ENCODE measurements at regions of chr11 and their contacts with region 1.

Region 1: GRCh38 chr11:11028017-11028692 is 170.3 kb upstream of the ZBED5 start:
- DNase-seq: no peak
- ATAC-seq: peak; percentile 97
- H3K4me3 ChIP-seq: no peak overlapping the region
- H3K27ac ChIP-seq: no peak overlapping the region
- H3K4me1 ChIP-seq: no peaks in the 10 kb centered on the region
- H3K27me3 ChIP-seq: peaks cover 0 to 2% of the 10 kb centered on the region in 2 experiments; a peak in 2 of 4 replicates
- CTCF ChIP-seq: peak; percentile 81 to 88 (median 83)
- EP300 ChIP-seq: no peak
- POLR2A ChIP-seq: no peak
- RAD21 ChIP-seq: peak; percentile 74

Region 2: DNA sequence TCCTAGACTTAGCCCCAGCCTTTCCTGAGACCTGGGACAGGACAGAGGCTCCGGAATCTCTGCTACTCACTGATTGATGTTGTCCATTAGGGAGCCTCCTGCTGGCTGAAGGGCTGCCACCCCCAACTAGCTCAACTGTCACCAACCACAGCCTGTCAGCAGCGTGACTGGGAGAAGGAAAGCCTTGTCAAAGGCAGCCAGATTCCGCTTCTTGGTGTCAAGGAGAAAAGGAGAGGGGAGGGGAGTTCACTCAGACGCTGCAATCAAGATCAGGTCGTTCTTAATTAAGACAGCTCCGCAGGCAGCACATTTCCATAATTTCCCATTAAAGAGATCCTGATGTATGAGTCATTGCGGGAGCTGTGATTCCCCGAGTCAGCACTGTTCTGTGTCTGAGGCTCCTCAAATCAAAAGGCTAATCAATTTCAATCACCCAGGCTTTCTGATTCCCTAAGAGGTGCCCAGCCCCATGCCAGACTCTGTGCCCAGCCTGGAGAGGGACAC is 17.5 kb before region 1 on chr11:
- CTCF ChIA-PET with region 1: interaction called, 21 read pairs
- POLR2A ChIA-PET with region 1: no interaction called
- RAD21 ChIA-PET with region 1: no interaction called
- SMC1A ChIA-PET with region 1: interaction called, 15 read pairs
- in situ Hi-C with region 1: no loop called
- intact Hi-C with region 1: no loop called
- DNase-seq: no peak
- ATAC-seq: no peak
- H3K4me3 ChIP-seq: no peak overlapping the region
- H3K27ac ChIP-seq: no peak overlapping the region
- H3K4me1 ChIP-seq: no peaks in the 10 kb centered on the region
- H3K27me3 ChIP-seq: peaks cover 0 to 5% of the 10 kb centered on the region in 2 experiments; a peak in 2 of 4 replicates
- CTCF ChIP-seq: 0 out of 6 replicates have a peak, but pooled peaks of 1 of the 3 experiments have one; percentile 7
- EP300 ChIP-seq: no peak
- POLR2A ChIP-seq: no peak
- RAD21 ChIP-seq: no peak

Region 3: DNA sequence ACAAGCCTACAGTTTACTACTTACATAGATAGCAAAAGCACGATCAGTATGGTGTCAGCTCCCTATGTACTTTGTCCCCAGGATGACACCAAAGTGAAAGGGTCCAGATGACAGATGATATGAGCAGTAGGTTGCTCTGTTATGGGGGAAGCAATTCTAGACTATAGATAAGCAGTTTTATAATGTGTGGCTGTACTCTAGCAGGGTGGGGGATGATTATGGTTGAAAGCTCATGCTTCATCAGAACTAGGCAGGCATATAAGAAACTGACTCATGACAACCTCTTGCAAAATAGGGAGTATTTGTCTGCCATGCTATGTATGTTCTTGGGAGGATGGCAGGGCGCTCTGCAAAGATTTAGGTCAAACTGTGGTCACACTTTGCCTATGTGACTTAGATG is 12.1 kb before region 1 on chr11:
- CTCF ChIA-PET with region 1: interaction called, 21 read pairs
- POLR2A ChIA-PET with region 1: no interaction called
- RAD21 ChIA-PET with region 1: interaction called, 5 read pairs
- SMC1A ChIA-PET with region 1: interaction called, 15 read pairs
- in situ Hi-C with region 1: no loop called
- intact Hi-C with region 1: no loop called
- DNase-seq: no peak
- ATAC-seq: no peak
- H3K4me3 ChIP-seq: no peak overlapping the region
- H3K27ac ChIP-seq: no peak overlapping the region
- H3K4me1 ChIP-seq: no peaks in the 10 kb centered on the region
- H3K27me3 ChIP-seq: peaks cover 0 to 6% of the 10 kb centered on the region in 2 experiments; a peak in 2 of 4 replicates
- CTCF ChIP-seq: no peak
- EP300 ChIP-seq: no peak
- POLR2A ChIP-seq: no peak
- RAD21 ChIP-seq: no peak

Region 4: GRCh38 chr11:11318961-11319360 is 290.8 kb after region 1 on chr11:
- CTCF ChIA-PET with region 1: no interaction called
- POLR2A ChIA-PET with region 1: no interaction called
- RAD21 ChIA-PET with region 1: no interaction called
- SMC1A ChIA-PET with region 1: no interaction called
- in situ Hi-C with region 1: no loop called
- intact Hi-C with region 1: no loop called
- DNase-seq: peak; percentile 11
- ATAC-seq: peak; percentile 81
- H3K4me3 ChIP-seq: no peak overlapping the region
- H3K27ac ChIP-seq: no peak overlapping the region
- H3K4me1 ChIP-seq: no peaks in the 10 kb centered on the region
- H3K27me3 ChIP-seq: no peaks in the 10 kb centered on the region
- CTCF ChIP-seq: no peak
- EP300 ChIP-seq: no peak
- POLR2A ChIP-seq: no peak
- RAD21 ChIP-seq: no peak

Measured in GM12878 (cell line).